ENCODE measurements at regions of chr3 and their contacts with region 1.

Region 1: DNA sequence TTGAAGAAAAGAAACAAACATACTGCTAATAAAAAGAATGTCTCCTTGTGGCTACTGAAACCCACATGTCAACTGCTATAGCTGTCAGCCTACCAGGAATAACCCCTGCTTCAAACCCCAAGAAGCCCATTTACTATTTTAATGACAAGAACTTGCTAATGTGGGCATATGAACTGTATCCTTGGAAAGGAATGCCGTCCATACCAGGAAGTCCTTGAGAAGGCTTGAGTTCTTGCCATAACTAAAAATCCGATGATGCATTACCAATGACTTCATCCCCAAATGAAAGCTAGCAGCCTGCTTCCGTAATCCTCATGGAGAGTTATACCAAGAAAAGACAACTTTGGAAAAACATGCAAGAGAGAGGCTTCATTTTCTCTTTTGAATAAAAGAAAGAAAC is 34.8 kb downstream of the MINDY4B start:
- DNase-seq: no peak
- ATAC-seq: no peak

Region 2: DNA sequence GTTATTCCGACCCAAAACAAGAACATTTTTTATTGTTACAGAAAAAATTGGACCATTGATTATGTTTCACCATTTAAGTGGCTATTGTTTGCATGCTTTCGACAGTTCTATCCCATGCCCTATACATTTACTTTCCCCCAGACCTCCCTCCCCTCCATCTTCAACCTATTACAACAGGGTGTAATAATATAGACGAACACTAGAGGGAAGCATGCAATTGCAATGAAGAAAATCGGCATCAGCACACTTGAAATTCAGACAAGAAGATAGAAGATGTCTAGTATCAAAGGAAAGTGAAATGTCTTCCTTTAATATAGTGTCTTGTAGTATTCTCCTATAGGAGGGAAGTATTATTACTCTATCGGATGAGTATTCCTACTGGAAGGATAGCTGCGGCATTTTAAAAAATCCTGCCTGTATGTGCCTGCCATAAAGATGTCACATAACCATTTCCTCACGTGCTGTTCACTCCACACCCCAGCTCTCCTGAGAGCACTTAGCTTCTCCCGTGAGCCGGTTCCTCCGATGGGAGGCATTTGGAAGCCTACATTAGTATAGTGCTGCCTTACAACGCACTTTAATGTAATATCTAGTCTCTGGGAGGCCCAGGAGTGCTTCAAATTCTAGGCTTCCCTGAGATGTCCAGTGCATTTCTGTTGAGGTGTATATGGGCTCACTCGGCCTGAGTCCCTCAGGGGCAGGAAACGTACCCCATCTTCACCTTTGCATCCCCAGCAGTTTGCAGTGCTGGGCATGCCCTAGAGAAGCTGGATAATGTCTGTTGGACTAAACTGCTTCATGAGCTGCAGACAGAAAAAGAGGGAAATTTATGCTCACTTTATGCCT is 148.9 kb before region 1 on chr3:
- intact Hi-C with region 1: loop called in 1 of 2 experiments (anchors 1 kb)
- DNase-seq: no peak
- ATAC-seq: peak; percentile 65 to 72

Region 3: GRCh38 chr3:150787741-150788370 is 82.5 kb before region 1 on chr3:
- intact Hi-C with region 1: loop called (anchors 2 to 10 kb)
- DNase-seq: peak; percentile 89
- ATAC-seq: peak; percentile 80 to 82

Measured in left cardiac atrium (tissue), 4 donors.